ENCODE measurements at regions of chr5 and their contacts with region 1.

Region 1: GRCh38 chr5:188488-189481 is 2.5 kb upstream of the LRRC14B start:
- DNase-seq: peak; percentile 84 to 91
- ATAC-seq: peak; percentile 53 to 62
- H3K4me3 ChIP-seq: peak overlapping the region; percentile 35 to 58 (median 41)
- H3K27ac ChIP-seq: peak overlapping the region; percentile 95 to 100 (median 99)
- H3K4me1 ChIP-seq: peaks cover 53 to 59% of the 10 kb centered on the region in 2 donors
- H3K27me3 ChIP-seq: no peaks in the 10 kb centered on the region
- CTCF ChIP-seq: peak; percentile 94 to 98 (median 98)
- POLR2A ChIP-seq: peak in 1 of 2 donors; percentile 41

Region 2: GRCh38 chr5:1111727-1112289 is 923.0 kb after region 1 on chr5 and contains the start of gene SLC12A7:
- in situ Hi-C with region 1: no loop called
- intact Hi-C with region 1: loop called (anchors 5 kb)
- DNase-seq: no peak
- ATAC-seq: peak; percentile 35 to 50
- H3K4me3 ChIP-seq: peak within 1 kb of the TSS; percentile 65 to 87 (median 74)
- H3K27ac ChIP-seq: peak within 1 kb of the TSS; percentile 73 to 84 (median 76)
- H3K4me1 ChIP-seq: peaks cover 9% of the 10 kb centered on the region in 2 donors
- H3K27me3 ChIP-seq: peaks cover 5 to 14% (median 7%) of the 10 kb centered on the region in 3 donors
- CTCF ChIP-seq: no peak
- POLR2A ChIP-seq: peak; percentile 72 to 78
- total RNA-seq, gene SLC12A7: 1.6 to 5.3 (median 3.5) TPM

Measured in gastrocnemius medialis (tissue), 4 donors.